Endothelial cell of umbilical vein (primary cell): ENCODE measurements at regions of chr5 and their contacts with region 1.

Region 1: GRCh38 chr5:7364226-7364875 is 31.6 kb upstream of the ADCY2 start:
- DNase-seq: no peak
- H3K4me3 ChIP-seq: no peak overlapping the region
- H3K27ac ChIP-seq: no peak overlapping the region
- H3K4me1 ChIP-seq: no peaks in the 10 kb centered on the region
- H3K27me3 ChIP-seq: no peaks in the 10 kb centered on the region
- CTCF ChIP-seq: no peak
- POLR2A ChIP-seq: no peak

Region 2: GRCh38 chr5:7348168-7348854 is 16.0 kb before region 1 on chr5:
- CTCF ChIA-PET with region 1: no interaction called
- POLR2A ChIA-PET with region 1: no interaction called
- dilution Hi-C with region 1: no loop called
- intact Hi-C with region 1: loop called (anchors 1 kb)
- DNase-seq: no peak
- H3K4me3 ChIP-seq: no peak overlapping the region
- H3K27ac ChIP-seq: no peak overlapping the region
- H3K4me1 ChIP-seq: no peaks in the 10 kb centered on the region
- H3K27me3 ChIP-seq: no peaks in the 10 kb centered on the region
- CTCF ChIP-seq: no peak
- POLR2A ChIP-seq: no peak

Region 3: GRCh38 chr5:7376871-7377270 is 12.5 kb after region 1 on chr5:
- CTCF ChIA-PET with region 1: no interaction called
- POLR2A ChIA-PET with region 1: no interaction called
- dilution Hi-C with region 1: no loop called
- intact Hi-C with region 1: loop called (anchors 1 kb)
- DNase-seq: no peak
- H3K4me3 ChIP-seq: no peak overlapping the region
- H3K27ac ChIP-seq: no peak overlapping the region
- H3K4me1 ChIP-seq: no peaks in the 10 kb centered on the region
- H3K27me3 ChIP-seq: no peaks in the 10 kb centered on the region
- CTCF ChIP-seq: no peak
- POLR2A ChIP-seq: no peak

Region 4: GRCh38 chr5:7548596-7548995 is 184.2 kb after region 1 on chr5:
- CTCF ChIA-PET with region 1: no interaction called
- POLR2A ChIA-PET with region 1: no interaction called
- dilution Hi-C with region 1: no loop called
- intact Hi-C with region 1: no loop called
- DNase-seq: no peak
- H3K4me3 ChIP-seq: no peak overlapping the region
- H3K27ac ChIP-seq: no peak overlapping the region
- H3K4me1 ChIP-seq: no peaks in the 10 kb centered on the region
- H3K27me3 ChIP-seq: no peaks in the 10 kb centered on the region
- CTCF ChIP-seq: no peak
- POLR2A ChIP-seq: no peak

Region 5: DNA sequence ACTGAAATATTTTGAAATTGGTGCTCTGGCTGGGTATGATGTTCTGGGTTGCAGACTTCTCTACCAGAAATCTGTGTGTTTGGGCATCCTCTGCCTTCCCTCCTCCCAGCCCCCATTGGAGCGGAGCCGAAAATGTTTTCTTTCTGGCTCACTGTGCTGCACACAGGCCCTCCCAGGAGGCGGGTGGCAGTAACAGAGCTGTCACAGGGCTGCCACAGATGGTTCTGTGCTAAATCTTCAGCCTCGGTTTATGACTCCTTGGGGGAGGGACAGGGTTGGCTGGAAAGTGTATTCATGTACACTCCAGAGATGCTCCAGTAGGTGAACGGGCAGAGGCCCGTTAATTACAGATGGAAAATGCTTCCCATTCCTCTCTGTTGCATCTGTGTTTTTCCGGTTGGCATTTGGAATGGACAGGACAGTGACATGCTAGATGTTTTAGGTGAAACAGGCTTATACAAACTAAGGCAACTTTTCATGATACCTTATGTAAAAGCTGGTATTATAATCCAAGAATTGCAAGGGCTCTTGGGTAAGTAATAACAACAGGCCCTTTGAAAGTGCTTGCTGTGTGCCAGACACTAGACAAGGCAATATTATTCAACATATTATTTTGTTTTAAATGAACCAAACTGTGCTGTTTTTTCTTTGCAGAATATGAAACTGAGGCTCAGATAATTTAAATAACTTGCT is 211.8 kb after region 1 on chr5:
- CTCF ChIA-PET with region 1: no interaction called
- POLR2A ChIA-PET with region 1: no interaction called
- dilution Hi-C with region 1: no loop called
- intact Hi-C with region 1: no loop called
- DNase-seq: no peak
- H3K4me3 ChIP-seq: no peak overlapping the region
- H3K27ac ChIP-seq: no peak overlapping the region
- H3K4me1 ChIP-seq: no peaks in the 10 kb centered on the region
- H3K27me3 ChIP-seq: no peaks in the 10 kb centered on the region
- CTCF ChIP-seq: no peak
- POLR2A ChIP-seq: no peak